Activated CD4-positive, alpha-beta T cell treated with anti-CD3 and anti-CD28 coated beads, Interleukin-2, amount 10 ng/mL, durations not matched to agents 7 days and 5 days (primary cell): ENCODE measurements at regions of chr14 and their contacts with region 1.

Region 1: GRCh38 chr14:64772393-64772950 is 68.2 kb downstream of the PLEKHG3 start:
- DNase-seq: no peak
- H3K4me3 Mint-ChIP-seq: no peak overlapping the region
- H3K27ac Mint-ChIP-seq: no peak overlapping the region
- H3K4me1 Mint-ChIP-seq: peaks cover 15% of the 10 kb centered on the region
- H3K27me3 Mint-ChIP-seq: no peaks in the 10 kb centered on the region

Region 2: GRCh38 chr14:64760146-64760755 is 12.2 kb before region 1 on chr14:
- CTCF ChIA-PET with region 1: interaction called, 22 read pairs
- POLR2A ChIA-PET with region 1: no interaction called
- DNase-seq: peak; percentile 68
- H3K4me3 Mint-ChIP-seq: no peak overlapping the region
- H3K27ac Mint-ChIP-seq: peak overlapping the region; percentile 59
- H3K4me1 Mint-ChIP-seq: peaks cover 68% of the 10 kb centered on the region
- H3K27me3 Mint-ChIP-seq: peaks cover 14% of the 10 kb centered on the region